Posterior vena cava (tissue), 2 donors: ENCODE measurements at regions of chr16 and their contacts with region 1.

Region 1: DNA sequence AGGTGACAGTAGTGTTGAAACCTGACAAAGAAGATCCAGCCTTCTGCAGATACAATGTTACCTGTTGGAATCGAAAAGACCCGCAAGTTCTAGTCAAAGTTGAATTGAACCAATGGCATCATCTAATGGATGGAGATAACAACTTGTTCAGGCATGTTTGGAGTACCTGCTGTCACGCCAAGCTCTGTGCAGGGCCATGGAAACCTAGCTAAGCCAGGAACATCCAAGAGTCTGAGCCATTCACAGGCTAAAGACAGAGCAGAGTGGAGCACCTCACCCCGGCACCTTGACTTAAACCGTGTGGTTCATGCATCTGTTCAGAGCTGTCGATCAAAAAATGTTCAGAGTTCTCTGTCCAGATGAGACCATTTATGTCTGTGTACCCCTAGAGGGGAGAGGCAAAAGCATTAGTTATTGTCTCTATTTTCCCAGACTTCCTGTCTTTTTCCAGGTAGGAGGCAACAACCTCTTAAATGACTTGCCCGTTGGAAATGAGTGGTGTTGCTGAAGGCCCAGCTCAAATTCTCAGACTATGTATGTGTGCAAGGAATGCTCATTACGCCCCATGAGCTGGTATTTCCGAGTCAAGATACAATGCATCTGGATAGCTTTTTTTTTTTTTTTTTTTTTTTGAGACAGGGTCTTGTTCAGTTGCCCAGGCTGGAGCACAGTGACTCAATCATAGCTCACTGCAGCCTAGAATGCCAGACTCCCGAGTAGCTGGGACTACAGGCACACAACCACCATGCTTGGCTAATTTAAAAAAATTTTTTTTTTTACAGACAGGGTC is 44.9 kb upstream of the XYLT1 start:
- DNase-seq: no peak

Region 2: DNA sequence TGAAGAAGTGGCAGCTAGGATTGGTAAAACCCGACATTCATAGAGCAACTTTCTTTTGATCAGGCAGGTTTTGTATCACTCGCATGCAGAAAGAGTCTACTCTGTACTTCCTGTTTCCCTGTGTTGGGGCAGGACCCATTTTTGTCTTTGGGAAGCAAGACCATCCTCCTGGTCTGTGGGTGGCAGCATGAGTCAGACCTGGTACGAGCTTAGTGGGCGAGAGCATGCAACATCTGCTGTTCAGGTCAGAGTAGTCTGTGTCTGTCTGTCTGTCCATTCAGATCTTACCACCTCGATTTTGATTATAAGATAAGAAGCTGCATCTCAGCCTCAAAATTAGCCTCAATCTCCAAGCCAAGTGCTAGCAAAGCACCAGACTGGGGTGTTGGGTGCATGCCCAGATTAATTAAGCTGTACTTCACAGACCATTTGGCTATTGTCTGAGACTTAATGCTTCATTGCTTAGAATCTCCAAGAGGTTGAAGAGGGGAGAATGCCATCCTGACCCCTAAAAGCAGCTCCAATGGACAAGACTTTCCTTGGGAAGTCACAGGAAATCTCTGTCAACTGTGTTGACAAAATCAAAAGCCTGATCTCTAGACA is 155.7 kb before region 1 on chr16:
- intact Hi-C with region 1: no loop called
- DNase-seq: peak; percentile 80

Region 3: GRCh38 chr16:17552351-17552750 is 36.7 kb after region 1 on chr16:
- intact Hi-C with region 1: loop called in 1 of 2 experiments (anchors 2 kb)
- DNase-seq: no peak

Region 4: GRCh38 chr16:17647879-17648872 is 132.6 kb after region 1 on chr16:
- intact Hi-C with region 1: no loop called
- DNase-seq: no peak